HCT116 (cell line): ENCODE measurements at regions of chr14 and their contacts with region 1.

Region 1: DNA sequence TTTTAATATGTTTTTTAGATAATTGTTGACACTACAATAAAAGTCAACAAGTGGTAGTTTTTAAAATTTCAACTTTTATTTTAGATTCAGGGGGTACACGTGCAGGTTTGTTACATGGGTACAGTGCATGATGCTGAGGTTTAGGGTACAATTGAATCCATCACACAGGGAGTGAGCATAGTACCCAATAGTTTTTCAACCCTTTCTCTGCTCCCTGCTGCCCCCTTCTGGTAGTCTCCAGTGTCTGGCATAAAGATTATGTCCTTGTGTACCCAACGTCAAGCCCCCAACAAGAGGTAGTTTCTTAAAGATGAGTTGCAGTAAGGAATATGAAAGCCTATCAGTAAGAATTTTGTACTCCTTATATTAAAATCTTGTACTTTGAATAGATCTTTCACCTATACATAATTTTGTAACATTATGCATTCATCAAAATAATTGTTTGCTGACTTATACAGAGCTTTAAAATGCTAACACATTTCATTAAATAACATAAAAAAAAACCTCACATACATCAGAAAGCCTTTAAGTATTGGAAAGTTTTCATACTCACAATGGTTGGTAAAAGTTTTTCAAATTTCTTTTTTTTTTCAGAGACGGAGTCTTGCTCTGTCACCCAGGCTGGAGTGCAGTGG is 5.4 kb upstream of the RALGAPA1 start:
- DNase-seq: peak; percentile 47
- ATAC-seq: peak; percentile 89
- H3K4me3 ChIP-seq: no peak overlapping the region
- H3K27ac ChIP-seq: no peak overlapping the region
- H3K4me1 ChIP-seq: peaks cover 0 to 2% of the 10 kb centered on the region in 2 experiments; a peak in 3 of 4 replicates
- H3K27me3 ChIP-seq: no peaks in the 10 kb centered on the region
- CTCF ChIP-seq: peak; percentile 24 to 86 (median 79); a peak in 5 of 6 replicates
- POLR2A ChIP-seq: no peak
- RAD21 ChIP-seq: peak; percentile 42

Region 2: GRCh38 chr14:35121887-35122695 is 692.4 kb before region 1 on chr14 and contains the starts of genes PPP2R3C and PRORP:
- CTCF ChIA-PET with region 1: no interaction called
- POLR2A ChIA-PET with region 1: no interaction called
- RAD21 ChIA-PET with region 1: no interaction called
- intact Hi-C with region 1: loop called (anchors 10 kb)
- DNase-seq: peak; percentile 93
- ATAC-seq: peak; percentile 87
- H3K4me3 ChIP-seq: peak within 1 kb of the TSS; percentile 81 to 91
- H3K27ac ChIP-seq: peak within 1 kb of the TSS; percentile 91
- H3K4me1 ChIP-seq: peaks cover 6 to 23% of the 10 kb centered on the region in 2 experiments
- H3K27me3 ChIP-seq: no peaks in the 10 kb centered on the region
- CTCF ChIP-seq: no peak
- POLR2A ChIP-seq: peak; percentile 41
- RAD21 ChIP-seq: no peak
- total RNA-seq, gene PPP2R3C: 14.1 TPM
- total RNA-seq, gene PRORP: 28.0 TPM

Region 3: DNA sequence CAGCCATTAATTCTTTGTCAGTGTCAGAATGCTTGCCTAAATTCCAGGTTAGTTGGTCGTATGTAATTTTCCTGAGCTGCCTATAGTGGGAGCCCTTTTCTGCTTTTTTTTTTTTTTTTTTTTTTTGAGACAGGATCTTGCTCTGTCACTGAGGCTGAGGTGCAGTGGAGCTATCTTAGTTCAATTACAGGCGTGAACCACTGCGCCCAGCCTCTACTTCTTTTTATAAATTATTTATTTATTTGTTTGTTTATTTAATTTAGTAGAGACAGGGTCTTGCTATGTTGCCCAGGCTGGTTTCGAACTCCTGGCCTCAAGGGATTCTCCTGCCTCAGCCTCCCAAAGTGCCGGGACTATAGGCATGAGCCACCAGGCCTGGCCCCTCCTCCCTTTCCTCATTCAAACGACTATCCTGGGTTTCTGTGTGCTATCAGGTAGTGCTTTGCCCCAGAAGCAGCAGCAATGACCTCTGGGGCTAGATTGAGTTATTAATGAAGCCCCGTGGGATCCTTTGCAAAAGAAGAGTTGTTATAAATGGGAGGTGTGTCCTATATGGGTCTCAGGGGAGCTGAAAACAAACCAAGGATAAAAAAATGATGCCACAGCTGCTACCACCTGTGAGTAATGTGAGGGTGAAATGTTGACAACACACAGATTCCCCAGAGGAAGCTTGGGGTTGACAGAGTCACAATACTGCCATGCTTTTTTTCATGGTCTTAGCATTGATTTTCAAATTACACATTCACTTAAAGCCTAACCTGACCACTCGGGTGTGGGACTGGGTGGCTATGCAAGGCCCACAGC is 375.4 kb before region 1 on chr14:
- CTCF ChIA-PET with region 1: interaction called, 14 read pairs
- POLR2A ChIA-PET with region 1: interaction called, 3 read pairs
- RAD21 ChIA-PET with region 1: interaction called in 1 of 2 experiments, 3 read pairs
- intact Hi-C with region 1: no loop called
- DNase-seq: peak; percentile 31
- ATAC-seq: peak; percentile 73
- H3K4me3 ChIP-seq: no peak overlapping the region
- H3K27ac ChIP-seq: no peak overlapping the region
- H3K4me1 ChIP-seq: peaks cover 4 to 10% of the 10 kb centered on the region in 2 experiments; a peak in 3 of 4 replicates
- H3K27me3 ChIP-seq: no peaks in the 10 kb centered on the region
- CTCF ChIP-seq: peak; percentile 45 to 66 (median 65); a peak in 5 of 6 replicates
- POLR2A ChIP-seq: no peak
- RAD21 ChIP-seq: peak; percentile 56; the same call in 1 of the 2 replicates

Region 4: DNA sequence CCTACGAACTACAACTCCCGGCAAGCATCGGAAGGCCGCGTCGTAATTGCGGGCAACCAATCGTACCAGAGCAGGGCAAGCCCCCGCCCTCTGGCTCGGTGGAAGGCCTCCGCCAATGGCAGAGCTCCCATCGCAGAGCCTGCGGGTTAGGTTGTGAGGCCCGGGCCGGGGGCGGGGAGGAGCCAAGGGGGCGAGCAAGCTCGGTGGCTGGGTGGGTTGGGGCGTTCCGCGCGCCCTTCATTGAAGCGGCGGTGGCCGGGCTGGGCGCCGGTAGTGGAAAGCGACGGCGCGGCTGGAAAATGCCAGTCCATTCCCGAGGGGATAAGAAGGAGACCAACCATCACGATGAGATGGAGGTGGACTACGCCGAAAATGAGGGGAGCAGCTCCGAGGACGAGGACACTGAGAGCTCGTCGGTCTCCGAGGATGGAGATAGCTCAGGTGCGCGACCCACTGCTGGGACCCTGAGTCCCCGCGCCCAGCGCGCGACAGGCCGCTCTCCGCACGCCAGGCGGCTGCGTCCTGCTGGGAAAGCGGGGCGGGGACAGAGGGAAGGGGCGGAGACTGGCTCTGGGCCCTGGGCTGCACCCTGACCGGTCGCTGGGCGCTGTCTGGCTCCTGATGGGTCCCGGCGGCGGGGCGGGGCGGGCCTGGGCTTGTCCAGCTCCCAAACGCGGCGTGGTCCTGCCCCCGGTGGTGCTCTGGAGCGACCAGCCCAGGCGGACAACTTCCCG is 11.9 kb after region 1 on chr14 and contains the start of gene BRMS1L:
- CTCF ChIA-PET with region 1: interaction called, 15 read pairs
- POLR2A ChIA-PET with region 1: interaction called, 10 read pairs
- RAD21 ChIA-PET with region 1: no interaction called
- intact Hi-C with region 1: no loop called
- DNase-seq: peak; percentile 95
- ATAC-seq: peak; percentile 94
- H3K4me3 ChIP-seq: peak within 1 kb of the TSS; percentile 74 to 82
- H3K27ac ChIP-seq: peak within 1 kb of the TSS; percentile 91
- H3K4me1 ChIP-seq: peaks cover 4 to 20% of the 10 kb centered on the region in 2 experiments
- H3K27me3 ChIP-seq: no peaks in the 10 kb centered on the region
- CTCF ChIP-seq: 0 out of 6 replicates have a peak, but pooled peaks of 1 of the 3 experiments have one; percentile 14
- POLR2A ChIP-seq: peak; percentile 90
- RAD21 ChIP-seq: no peak
- total RNA-seq, gene BRMS1L: 6.2 TPM